AG04449 (cell line): ENCODE measurements at regions of chr12 and their contacts with region 1.

Region 1: DNA sequence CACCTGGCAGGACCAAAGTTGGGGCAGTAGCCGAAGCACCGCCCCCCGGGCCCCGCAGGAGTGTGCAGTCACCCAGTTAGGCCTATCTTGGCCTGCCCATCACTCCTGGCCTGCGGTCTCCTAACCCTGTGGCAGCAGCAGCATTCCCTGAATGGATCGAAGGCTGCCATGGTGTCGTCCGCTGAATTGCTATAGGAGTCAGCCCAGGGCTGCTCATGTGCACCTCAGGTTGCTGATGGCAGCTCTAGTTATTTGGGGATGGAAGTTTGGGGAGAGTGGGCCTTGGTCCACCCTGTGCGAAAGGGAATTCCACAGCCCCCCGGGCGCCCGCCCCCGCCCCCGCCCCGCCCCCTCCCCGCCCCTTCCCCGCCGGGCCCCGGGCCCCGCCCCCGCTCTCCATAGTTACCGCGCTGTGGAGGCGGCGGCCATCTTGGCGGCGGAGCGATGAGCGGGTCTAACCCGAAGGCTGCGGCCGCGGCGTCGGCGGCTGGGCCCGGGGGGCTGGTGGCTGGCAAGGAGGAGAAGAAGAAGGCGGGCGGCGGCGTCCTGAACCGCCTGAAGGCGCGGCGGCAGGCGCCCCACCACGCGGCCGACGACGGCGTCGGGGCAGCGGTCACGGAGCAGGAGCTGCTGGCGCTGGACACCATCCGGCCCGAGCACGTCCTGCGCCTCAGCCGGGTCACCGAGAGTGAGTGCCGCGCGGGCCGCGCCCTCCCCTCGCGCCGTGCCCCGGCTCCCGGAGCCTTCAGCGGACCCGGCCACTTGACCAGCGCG is at the start of gene UNC119B:
- DNase-seq: no peak
- H3K4me3 ChIP-seq: peak within 1 kb of the TSS; percentile 75
- CTCF ChIP-seq: no peak

Region 2: DNA sequence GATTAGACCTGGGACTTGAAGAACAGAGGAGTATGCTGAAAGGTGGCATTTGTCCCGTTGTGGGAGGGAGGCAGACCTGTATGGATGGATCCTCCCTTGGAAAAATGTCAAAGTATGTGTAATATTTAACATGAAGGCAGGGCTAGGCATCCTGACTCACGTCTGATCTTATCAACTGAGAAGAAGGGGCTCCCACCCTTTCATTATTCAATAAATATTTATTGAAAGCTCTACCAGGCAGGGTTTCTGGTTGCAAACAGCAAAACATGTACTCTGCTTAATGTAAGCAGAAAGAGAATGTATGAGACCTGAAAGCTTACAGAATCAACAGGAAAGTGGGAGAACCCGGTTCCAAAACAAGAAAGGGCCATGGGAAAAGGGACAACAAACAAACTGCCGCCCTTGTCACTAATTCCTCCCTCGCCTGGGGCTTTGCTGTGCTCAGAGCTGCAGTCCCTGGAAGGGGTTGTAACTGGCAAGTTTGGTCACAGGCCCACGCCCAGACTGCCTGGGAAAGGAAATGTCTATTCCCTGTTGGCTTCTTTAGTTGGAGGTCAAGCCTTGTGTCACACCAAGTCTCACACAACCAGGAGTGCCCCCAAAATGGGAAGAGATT is 630.7 kb before region 1 on chr12:
- CTCF ChIA-PET with region 1: no interaction called
- POLR2A ChIA-PET with region 1: no interaction called
- DNase-seq: no peak
- H3K4me3 ChIP-seq: no peak overlapping the region
- CTCF ChIP-seq: no peak

Region 3: DNA sequence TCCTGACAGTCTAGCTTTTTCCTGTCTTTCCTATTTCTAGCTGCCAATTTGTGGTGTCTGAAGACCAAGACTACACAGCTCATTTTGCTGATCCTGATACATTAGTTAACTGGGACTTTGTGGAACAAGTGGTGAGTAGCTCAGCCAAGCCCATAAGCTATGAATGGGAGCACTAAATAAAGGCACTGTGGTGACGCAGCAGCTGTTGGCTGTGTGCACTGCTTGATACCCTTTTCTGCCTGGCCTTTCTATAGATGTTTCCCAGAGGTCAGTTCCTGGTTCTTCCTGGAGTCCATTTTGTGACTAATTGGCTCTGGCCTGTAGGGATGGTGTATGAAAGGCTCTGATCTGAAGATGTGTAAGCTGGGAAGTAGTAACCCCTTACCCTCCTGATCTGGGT is 155.5 kb before region 1 on chr12:
- CTCF ChIA-PET with region 1: no interaction called
- POLR2A ChIA-PET with region 1: no interaction called
- DNase-seq: no peak
- H3K4me3 ChIP-seq: no peak overlapping the region
- CTCF ChIP-seq: no peak

Region 4: GRCh38 chr12:120698665-120699064 is 11.6 kb before region 1 on chr12:
- CTCF ChIA-PET with region 1: interaction called, 15 read pairs
- POLR2A ChIA-PET with region 1: no interaction called
- DNase-seq: no peak
- H3K4me3 ChIP-seq: no peak overlapping the region
- CTCF ChIP-seq: no peak

Region 5: DNA sequence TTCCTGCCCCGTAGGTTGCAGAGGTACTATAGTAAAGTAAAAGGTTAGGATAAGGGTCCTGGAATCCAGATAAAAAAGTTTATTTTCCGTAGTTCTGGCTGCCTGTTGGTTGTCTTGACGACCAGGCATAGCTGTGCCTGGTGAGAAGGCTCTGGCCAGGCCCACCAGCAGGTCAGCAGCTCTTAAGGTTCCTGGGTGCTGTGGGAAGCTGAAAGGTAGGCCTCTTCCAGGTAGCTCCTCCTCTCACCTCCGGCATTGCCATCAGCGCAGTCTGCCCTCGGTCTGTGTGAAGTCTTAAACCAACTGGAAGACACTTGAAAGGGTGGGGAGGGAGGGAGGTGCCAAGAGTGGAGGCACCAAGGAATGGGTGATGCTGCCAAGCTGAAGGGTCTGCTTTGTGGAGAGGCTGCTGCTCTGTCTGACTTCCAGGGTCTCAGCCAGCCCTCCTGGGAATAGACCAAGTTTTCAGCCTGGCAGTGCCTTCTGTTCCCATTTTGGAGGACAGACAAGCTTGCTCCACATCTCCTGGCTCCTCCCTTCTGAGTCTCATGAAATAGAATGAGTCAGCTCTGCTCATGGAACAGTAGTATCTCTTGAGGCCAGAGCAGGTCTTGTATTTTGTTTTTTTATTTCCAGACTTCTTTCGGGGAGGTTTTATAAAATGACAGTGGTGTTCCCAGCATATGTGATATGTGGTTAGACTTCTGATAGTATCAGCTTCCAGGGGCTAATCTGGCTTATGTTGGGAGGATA is 10.2 kb after region 1 on chr12:
- CTCF ChIA-PET with region 1: interaction called, 23 read pairs
- POLR2A ChIA-PET with region 1: interaction called, 10 read pairs
- DNase-seq: peak; percentile 21
- H3K4me3 ChIP-seq: no peak overlapping the region
- CTCF ChIP-seq: no peak